ENCODE measurements at regions of chr11 and their contacts with region 1.

Region 1: GRCh38 chr11:62816557-62816956 is 11.3 kb upstream of the NXF1 start:
- H3K4me3 ChIP-seq: no peak overlapping the region
- H3K27ac ChIP-seq: no peak overlapping the region
- H3K4me1 ChIP-seq: no peaks in the 10 kb centered on the region
- CTCF ChIP-seq: no peak

Region 2: GRCh38 chr11:62805076-62805892 is 11.3 kb before region 1 on chr11 and contains the start of gene NXF1:
- CTCF ChIA-PET with region 1: interaction called, 4 read pairs
- POLR2A ChIA-PET with region 1: interaction called, 11 read pairs
- H3K4me3 ChIP-seq: peak within 1 kb of the TSS; percentile 84
- H3K27ac ChIP-seq: peak within 1 kb of the TSS; percentile 63
- H3K4me1 ChIP-seq: no peaks in the 10 kb centered on the region
- CTCF ChIP-seq: no peak

Measured in HEK293 (cell line).